AG04449 (cell line): ENCODE measurements at regions of chr12 and their contacts with region 1.

Region 1: DNA sequence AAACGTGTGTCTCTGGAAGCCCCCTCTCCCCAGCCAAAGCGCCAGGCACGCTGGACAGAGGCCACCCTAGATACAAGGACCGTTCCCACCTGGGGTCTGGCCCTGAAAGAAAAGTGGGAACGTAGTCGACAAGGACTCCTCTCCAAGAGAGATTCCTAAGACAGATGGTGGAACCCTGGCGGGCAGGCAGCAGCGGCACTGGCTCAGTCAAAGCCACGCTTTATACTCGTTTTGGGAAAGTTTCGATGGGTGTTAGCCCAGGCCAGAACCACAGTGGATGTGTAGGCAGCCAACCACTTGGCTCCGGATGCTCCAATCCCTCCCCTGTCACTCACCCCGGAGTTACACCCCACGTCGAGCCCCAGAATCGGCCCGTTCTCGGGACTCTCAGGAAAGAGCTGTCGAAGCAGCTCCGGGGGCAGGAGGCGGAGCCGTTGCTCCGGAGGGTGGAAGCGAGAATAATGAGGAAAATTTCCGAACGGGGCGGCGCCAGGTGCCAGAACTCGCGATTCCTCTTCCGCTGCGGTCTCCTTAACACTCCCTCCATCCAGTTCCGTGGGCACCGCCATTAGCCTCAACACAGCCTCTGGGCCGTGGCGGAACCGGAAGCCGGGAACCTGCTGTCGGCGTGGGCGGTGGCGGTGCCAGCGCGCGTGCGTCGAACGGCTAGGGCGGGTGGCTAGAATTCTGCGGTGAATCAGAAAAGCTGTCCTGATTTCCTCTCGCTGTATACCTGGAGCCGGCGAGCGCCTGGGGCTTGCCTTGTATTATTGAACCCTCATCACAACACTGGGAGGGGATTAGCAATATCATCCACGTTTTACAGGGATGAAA is at the start of gene BCDIN3D:
- DNase-seq: peak; percentile 29
- H3K4me3 ChIP-seq: peak within 1 kb of the TSS; percentile 86
- CTCF ChIP-seq: no peak

Region 2: DNA sequence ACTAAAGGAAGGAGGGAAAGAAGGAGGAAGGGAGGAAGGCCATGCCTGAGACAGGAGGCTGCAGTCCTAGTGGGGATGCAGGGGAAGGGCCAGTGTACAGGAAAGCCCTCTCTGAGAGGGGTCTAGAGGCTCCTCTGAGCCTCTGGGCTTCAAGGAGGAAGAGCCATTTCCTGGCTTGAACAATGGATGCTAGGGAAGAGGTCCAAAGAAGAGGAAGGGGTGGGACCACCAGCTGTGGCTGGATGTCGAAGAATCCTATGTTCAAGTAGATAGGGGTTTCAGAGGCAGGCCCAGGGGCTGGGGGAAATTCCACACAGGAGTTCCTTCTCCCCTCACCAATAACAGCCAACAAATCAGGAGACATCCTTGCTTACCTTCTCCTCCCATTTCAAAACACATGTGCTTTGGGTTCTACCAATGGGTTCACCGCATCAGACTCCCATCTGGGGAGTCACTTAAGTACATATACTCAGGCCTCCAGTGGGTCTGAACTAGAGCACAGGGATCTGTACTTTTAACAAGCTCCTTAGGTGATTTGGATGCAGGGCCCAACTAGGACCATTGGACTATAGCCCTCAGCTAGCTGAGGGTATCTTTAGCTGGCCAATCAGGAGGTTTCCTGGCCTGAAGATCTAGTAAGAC is 187.0 kb before region 1 on chr12:
- CTCF ChIA-PET with region 1: no interaction called
- POLR2A ChIA-PET with region 1: no interaction called
- DNase-seq: no peak
- H3K4me3 ChIP-seq: no peak overlapping the region
- CTCF ChIP-seq: no peak

Region 3: DNA sequence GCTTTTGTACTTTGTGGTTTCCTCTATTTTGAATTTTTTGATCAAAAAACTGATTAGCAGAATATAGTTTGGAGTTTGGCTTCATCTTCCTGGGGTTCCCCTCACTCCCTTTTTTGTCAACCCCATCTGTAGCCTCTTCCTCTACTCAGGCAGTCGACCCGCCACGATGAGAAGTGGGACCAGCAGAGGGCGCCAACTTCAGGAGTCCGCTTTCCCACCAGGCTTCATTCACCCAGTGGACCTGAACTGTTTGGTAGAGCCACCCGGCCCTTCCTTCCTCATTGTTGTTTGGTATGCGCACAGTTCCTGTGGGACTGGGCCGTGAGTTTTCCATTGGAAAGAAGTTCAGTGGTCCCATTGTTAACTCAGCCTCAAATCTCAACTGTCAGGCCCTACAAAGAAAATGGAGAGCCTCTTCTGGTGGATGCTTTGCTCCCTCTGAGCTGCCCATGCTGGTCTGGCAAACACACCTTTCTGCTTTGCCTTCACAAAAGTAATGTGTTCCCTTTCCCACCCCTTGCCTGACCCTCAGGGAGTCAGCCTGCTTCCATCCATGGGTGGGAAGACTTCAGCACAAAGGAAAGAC is 79.6 kb before region 1 on chr12:
- CTCF ChIA-PET with region 1: interaction called, 17 read pairs
- POLR2A ChIA-PET with region 1: no interaction called
- DNase-seq: no peak
- H3K4me3 ChIP-seq: no peak overlapping the region
- CTCF ChIP-seq: peak; percentile 82

Region 4: GRCh38 chr12:49776413-49776812 is 66.3 kb before region 1 on chr12:
- CTCF ChIA-PET with region 1: interaction called, 98 read pairs
- POLR2A ChIA-PET with region 1: no interaction called
- DNase-seq: no peak
- H3K4me3 ChIP-seq: no peak overlapping the region
- CTCF ChIP-seq: peak; percentile 83

Region 5: GRCh38 chr12:49783917-49784676 is 58.6 kb before region 1 on chr12:
- CTCF ChIA-PET with region 1: interaction called, 98 read pairs
- POLR2A ChIA-PET with region 1: no interaction called
- DNase-seq: peak; percentile 33
- H3K4me3 ChIP-seq: no peak overlapping the region
- CTCF ChIP-seq: no peak

Region 6: DNA sequence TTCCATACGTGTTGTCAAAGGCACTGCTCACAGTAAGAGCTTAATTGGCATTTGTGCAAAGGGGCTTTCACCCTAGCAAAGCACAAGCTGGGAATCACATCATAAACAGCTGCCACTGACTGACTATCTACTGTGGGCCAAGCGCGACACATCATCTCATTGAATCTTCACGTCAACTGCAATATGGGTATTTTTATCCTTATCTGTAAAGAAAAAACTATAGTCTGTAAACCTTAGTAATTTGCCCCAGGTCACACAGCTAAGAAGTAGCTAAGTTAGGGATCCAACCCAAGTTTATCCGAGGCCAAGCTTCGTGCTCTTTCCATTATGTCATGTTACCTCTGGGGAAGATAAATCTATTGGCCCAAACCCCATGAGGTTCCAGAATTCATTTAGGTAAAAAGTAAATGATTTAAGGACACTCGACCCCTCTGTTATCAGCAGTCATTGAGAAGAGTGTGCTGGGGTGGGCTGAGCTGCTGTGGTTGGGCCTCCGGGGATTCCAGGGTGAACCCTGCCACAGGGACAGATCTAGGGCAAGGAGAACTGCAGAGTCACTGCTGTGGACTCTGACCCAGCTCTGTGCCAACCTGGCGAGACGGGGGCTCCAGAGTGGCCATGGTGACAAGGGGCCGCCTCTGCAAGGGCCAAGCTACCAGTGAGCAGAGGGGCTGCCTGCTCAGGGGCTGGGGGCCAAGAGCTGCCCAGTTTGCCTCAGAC is 42.2 kb before region 1 on chr12:
- CTCF ChIA-PET with region 1: interaction called, 10 read pairs
- POLR2A ChIA-PET with region 1: interaction called, 3 read pairs
- DNase-seq: no peak
- H3K4me3 ChIP-seq: no peak overlapping the region
- CTCF ChIP-seq: no peak

Region 7: GRCh38 chr12:49828133-49829091 is 14.3 kb before region 1 on chr12 and contains the start of gene NCKAP5L:
- CTCF ChIA-PET with region 1: interaction called, 61 read pairs
- POLR2A ChIA-PET with region 1: interaction called, 25 read pairs
- DNase-seq: peak; percentile 76
- H3K4me3 ChIP-seq: peak within 1 kb of the TSS; percentile 87
- CTCF ChIP-seq: no peak

Region 8: DNA sequence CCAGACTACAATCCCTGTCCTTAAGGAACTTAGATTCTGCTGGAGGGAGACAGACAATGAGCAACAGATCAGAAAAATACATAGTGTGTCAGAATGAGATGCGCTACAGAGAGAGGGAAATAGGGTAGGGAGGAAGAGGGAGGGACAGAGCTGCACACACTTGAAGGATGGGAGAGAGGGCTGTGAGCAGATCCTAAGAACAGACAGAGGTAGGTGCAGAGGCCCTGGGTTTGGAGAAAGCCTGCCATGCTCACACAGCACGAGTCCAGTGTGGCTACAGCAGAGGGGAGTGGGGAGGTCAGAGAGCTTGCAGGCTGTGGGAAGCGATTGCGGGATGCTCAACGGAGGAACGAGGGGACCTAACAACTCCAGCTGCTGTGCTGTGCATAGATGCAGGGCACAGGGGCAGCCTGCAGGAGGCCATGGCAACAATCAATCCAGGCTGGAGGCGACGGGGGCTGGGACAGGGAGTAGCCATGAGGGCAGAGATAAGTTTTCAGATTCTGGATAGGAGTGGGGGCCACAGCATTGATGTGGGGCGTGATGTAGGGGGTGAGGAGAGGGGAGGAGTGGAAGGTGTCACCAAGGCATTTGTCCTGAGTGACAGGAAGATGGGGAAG is 40.2 kb after region 1 on chr12:
- CTCF ChIA-PET with region 1: no interaction called
- POLR2A ChIA-PET with region 1: no interaction called
- DNase-seq: no peak
- H3K4me3 ChIP-seq: no peak overlapping the region
- CTCF ChIP-seq: no peak

Region 9: GRCh38 chr12:50222275-50222795 is 379.6 kb after region 1 on chr12:
- CTCF ChIA-PET with region 1: no interaction called
- POLR2A ChIA-PET with region 1: no interaction called
- DNase-seq: no peak
- H3K4me3 ChIP-seq: peak overlapping the region; percentile 96
- CTCF ChIP-seq: peak; percentile 49